ENCODE measurements at regions of chr4 and their contacts with region 1.

Region 1: DNA sequence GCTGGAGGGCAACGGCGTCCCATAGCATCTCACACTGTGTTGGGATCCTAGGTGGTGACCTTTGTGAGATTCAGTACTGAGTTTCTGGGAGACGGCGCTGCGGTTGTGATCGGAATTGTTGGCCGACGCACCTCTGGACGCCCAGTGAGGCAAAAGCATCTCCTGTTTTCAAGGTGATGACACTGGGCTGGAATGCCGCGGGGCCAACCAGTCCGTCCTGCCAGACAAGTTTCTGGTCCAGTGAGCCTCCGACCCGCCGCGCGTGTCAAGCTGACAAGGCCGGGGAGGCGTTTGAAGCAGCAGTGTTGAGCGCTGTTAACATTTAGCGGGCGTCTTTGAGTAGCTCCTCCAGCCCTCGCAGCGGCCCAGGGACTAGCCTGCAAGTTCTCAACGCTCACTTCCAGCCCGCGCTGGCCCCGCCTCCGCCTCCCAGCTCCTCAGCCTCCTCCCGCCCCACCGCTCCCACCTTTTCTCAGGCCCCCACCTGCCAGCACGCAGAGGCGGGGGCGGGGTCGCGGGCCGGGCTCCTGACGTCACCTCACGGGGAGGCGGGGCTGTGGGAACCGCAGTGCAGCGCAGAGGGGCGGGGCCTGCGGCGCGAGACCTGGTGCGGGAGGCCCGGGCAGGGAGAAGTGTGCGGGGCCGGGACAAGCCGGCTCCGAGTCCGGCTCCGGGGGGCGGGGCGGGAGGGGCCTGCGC is 476 bp upstream of the CDS1 start:
- DNase-seq: peak; percentile 99
- ATAC-seq: peak; percentile 84
- H3K4me3 Mint-ChIP-seq: peak overlapping the region; percentile 65
- H3K27ac Mint-ChIP-seq: peak overlapping the region; percentile 82
- H3K4me1 Mint-ChIP-seq: peaks cover 64% of the 10 kb centered on the region
- H3K27me3 Mint-ChIP-seq: peaks cover 16% of the 10 kb centered on the region
- CTCF ChIP-seq: no peak

Region 2: GRCh38 chr4:84417997-84418709 is 164.3 kb before region 1 on chr4:
- CTCF ChIA-PET with region 1: no interaction called
- POLR2A ChIA-PET with region 1: no interaction called
- DNase-seq: no peak
- ATAC-seq: no peak
- H3K4me3 Mint-ChIP-seq: no peak overlapping the region
- H3K27ac Mint-ChIP-seq: no peak overlapping the region
- H3K4me1 Mint-ChIP-seq: peaks cover 9% of the 10 kb centered on the region; the same call in 1 of the 2 replicates
- H3K27me3 Mint-ChIP-seq: 0 out of 2 replicates have a peak, but pooled peaks cover 2% of the 10 kb centered on the region
- CTCF ChIP-seq: no peak

Region 3: DNA sequence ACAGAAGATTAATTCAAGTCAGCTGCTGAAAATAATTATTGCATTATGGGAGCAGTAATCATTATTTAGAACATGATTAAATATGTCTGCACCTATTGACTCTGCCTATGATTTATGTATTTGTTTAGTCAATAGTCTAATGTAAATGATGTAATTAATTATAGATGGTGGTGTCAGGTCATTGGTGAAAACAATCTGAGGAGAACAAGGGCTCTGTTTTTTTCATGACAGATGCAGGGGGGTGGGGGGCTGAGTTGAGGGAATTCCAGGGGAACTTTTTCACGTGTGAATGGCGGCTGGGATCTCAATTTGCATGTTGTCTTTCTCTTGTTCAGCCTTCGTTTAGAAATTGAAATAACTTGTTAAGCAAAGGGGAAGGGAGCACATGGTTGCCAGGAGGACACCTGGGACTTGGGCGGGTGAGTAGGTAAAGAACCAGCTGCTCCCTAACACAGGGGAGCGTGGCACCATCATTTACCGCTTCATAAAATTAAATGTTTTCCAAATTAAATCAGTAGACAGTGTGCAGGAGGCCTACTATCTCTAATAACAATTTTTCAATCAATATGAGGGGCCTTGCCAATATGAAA is 148.7 kb before region 1 on chr4:
- CTCF ChIA-PET with region 1: no interaction called
- POLR2A ChIA-PET with region 1: no interaction called
- DNase-seq: no peak
- ATAC-seq: no peak
- H3K4me3 Mint-ChIP-seq: no peak overlapping the region
- H3K27ac Mint-ChIP-seq: no peak overlapping the region
- H3K4me1 Mint-ChIP-seq: peaks cover 12% of the 10 kb centered on the region
- H3K27me3 Mint-ChIP-seq: no peaks in the 10 kb centered on the region; the same call in 1 of the 2 replicates
- CTCF ChIP-seq: no peak

Region 4: GRCh38 chr4:84563002-84563401 is 19.4 kb before region 1 on chr4:
- CTCF ChIA-PET with region 1: interaction called, 39 read pairs
- POLR2A ChIA-PET with region 1: interaction called, 9 read pairs
- DNase-seq: no peak
- ATAC-seq: no peak
- H3K4me3 Mint-ChIP-seq: no peak overlapping the region
- H3K27ac Mint-ChIP-seq: peak overlapping the region; percentile 31
- H3K4me1 Mint-ChIP-seq: peaks cover 69% of the 10 kb centered on the region
- H3K27me3 Mint-ChIP-seq: no peaks in the 10 kb centered on the region
- CTCF ChIP-seq: no peak

Region 5: DNA sequence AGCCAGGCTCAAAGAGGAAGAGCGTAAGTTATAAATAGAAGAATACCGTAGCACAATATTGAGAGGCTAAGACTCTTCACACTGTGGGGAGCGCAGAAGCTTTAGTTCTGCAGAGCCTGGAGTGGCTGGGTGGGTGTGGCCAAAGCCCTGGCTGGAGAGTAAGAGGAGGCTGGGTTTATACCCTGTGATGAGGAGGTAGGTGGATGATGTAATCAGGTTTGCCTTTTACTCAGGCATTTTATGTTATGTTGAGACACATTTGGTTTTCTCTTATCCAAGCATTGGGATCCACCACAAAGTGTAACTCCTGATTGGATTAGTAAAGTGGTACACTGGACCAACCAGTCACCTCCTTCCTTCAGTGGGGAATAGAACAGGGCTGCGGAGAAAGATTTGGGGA is 14.4 kb after region 1 on chr4:
- CTCF ChIA-PET with region 1: interaction called, 13 read pairs
- POLR2A ChIA-PET with region 1: interaction called, 31 read pairs
- DNase-seq: peak; percentile 61
- ATAC-seq: peak; percentile 86
- H3K4me3 Mint-ChIP-seq: no peak overlapping the region
- H3K27ac Mint-ChIP-seq: peak overlapping the region; percentile 85
- H3K4me1 Mint-ChIP-seq: peaks cover 56% of the 10 kb centered on the region
- H3K27me3 Mint-ChIP-seq: no peaks in the 10 kb centered on the region
- CTCF ChIP-seq: no peak

Region 6: DNA sequence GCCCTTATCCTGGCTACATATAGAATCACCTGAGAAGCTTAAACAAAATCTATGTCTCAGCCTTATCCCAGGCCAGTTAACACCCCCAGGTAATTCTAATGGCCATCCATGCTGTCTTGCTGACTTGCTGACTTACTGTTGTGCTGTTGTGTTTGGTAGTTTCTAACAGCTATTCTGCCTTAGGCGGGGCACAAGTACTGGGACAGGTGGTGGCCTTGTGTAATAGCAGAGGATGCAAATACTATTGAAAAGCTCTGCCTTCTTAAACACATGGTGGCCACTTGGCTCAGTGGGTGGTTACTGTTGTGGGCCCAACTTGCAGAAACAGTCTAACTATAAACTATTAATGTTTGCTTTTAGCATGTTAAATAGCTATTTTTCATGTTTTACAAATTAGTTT is 56.7 kb after region 1 on chr4:
- CTCF ChIA-PET with region 1: interaction called, 11 read pairs
- POLR2A ChIA-PET with region 1: interaction called, 5 read pairs
- DNase-seq: no peak
- ATAC-seq: peak; percentile 92
- H3K4me3 Mint-ChIP-seq: no peak overlapping the region
- H3K27ac Mint-ChIP-seq: no peak overlapping the region
- H3K4me1 Mint-ChIP-seq: peaks cover 23% of the 10 kb centered on the region
- H3K27me3 Mint-ChIP-seq: no peaks in the 10 kb centered on the region
- CTCF ChIP-seq: no peak

Region 7: GRCh38 chr4:84706286-84706685 is 123.8 kb after region 1 on chr4:
- CTCF ChIA-PET with region 1: interaction called, 17 read pairs
- POLR2A ChIA-PET with region 1: no interaction called
- DNase-seq: no peak
- ATAC-seq: peak; percentile 26; the same call in 1 of the 2 replicates
- H3K4me3 Mint-ChIP-seq: no peak overlapping the region
- H3K27ac Mint-ChIP-seq: 0 out of 2 replicates have a peak overlapping the region, but pooled peaks have one; percentile 48
- H3K4me1 Mint-ChIP-seq: no peaks in the 10 kb centered on the region
- H3K27me3 Mint-ChIP-seq: no peaks in the 10 kb centered on the region
- CTCF ChIP-seq: no peak

Measured in WTC11 (cell line).